Endothelial cell of umbilical vein (primary cell): ENCODE measurements at regions of chr14 and their contacts with region 1.

Region 1: GRCh38 chr14:59275653-59276052 is 87.2 kb downstream of the DAAM1 start:
- DNase-seq: peak; percentile 89
- H3K4me3 ChIP-seq: no peak overlapping the region
- H3K27ac ChIP-seq: peak overlapping the region; percentile 60
- H3K4me1 ChIP-seq: peaks cover 43% of the 10 kb centered on the region
- H3K27me3 ChIP-seq: no peaks in the 10 kb centered on the region
- CTCF ChIP-seq: no peak
- POLR2A ChIP-seq: no peak

Region 2: DNA sequence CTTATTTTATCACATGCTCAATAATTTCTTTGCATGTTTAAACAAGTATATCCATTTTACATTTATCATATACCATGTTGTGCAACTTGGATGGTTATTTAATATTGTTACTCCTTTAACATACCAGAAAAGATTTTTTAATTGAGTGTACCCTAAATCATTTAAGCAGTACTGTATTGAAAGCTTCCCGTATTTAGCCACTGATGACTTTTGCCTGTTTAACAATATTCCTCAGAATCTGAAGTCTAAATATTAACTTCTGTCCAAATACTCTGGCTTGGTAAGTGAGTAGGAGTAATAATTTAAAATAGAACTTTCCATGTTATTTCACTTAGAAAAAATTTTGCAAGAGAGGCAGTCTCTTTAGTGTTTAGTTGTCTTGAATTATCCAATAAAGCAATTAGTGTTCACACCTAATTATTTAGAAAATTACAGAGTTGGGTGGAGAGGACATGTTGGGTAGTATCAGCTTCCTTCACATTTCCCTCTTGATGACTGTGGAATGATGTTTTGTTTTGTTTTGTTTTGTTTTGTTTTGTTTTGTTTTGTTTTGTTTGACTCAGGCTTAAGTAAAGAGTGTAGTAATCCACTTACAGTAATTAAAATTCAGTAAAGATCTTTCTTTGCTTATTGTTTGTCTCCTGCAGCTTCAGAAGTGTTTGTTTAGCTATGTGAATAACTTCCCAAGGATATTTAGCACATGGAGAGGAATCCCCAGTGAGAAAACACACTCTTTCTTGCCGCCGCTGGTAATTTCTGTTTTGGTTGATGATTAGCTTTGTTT is 27.7 kb before region 1 on chr14:
- CTCF ChIA-PET with region 1: interaction called, 4 read pairs
- POLR2A ChIA-PET with region 1: no interaction called
- dilution Hi-C with region 1: no loop called
- intact Hi-C with region 1: loop called (anchors 1 kb)
- DNase-seq: peak; percentile 29
- H3K4me3 ChIP-seq: no peak overlapping the region
- H3K27ac ChIP-seq: no peak overlapping the region
- H3K4me1 ChIP-seq: peaks cover 21% of the 10 kb centered on the region
- H3K27me3 ChIP-seq: no peaks in the 10 kb centered on the region
- CTCF ChIP-seq: no peak
- POLR2A ChIP-seq: no peak

Region 3: GRCh38 chr14:59320763-59321640 is 45.3 kb after region 1 on chr14:
- CTCF ChIA-PET with region 1: no interaction called
- POLR2A ChIA-PET with region 1: no interaction called
- dilution Hi-C with region 1: no loop called
- intact Hi-C with region 1: loop called (anchors 1 kb)
- DNase-seq: peak; percentile 90
- H3K4me3 ChIP-seq: peak overlapping the region in 1 of 3 experiments; percentile 23
- H3K27ac ChIP-seq: peak overlapping the region; percentile 84
- H3K4me1 ChIP-seq: peaks cover 21% of the 10 kb centered on the region
- H3K27me3 ChIP-seq: no peaks in the 10 kb centered on the region
- CTCF ChIP-seq: no peak
- POLR2A ChIP-seq: peak; percentile 29

Region 4: DNA sequence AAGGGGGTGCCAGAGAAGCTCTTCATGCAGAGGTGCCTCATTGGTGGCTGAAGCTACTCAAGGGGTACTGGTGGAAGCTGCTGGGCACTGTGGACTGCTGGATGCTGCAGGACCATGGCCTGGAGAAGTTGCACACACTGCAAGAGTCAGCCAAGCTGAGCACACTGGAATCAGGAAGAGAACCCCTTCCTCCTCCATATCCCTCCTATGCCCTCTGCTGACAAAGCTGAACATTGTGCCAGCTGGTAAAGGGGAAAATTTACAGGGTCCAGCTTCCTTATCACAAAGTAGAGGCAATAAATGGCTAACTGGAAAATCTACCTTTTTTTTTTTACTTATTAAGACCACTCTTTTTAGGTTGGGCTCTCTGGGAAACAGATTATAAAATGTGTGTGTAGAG is 294.5 kb after region 1 on chr14:
- CTCF ChIA-PET with region 1: no interaction called
- POLR2A ChIA-PET with region 1: no interaction called
- dilution Hi-C with region 1: no loop called
- intact Hi-C with region 1: no loop called
- DNase-seq: no peak
- H3K4me3 ChIP-seq: no peak overlapping the region
- H3K27ac ChIP-seq: no peak overlapping the region
- H3K4me1 ChIP-seq: no peaks in the 10 kb centered on the region
- H3K27me3 ChIP-seq: peaks cover 4 to 25% of the 10 kb centered on the region in 2 experiments
- CTCF ChIP-seq: no peak
- POLR2A ChIP-seq: no peak

Region 5: DNA sequence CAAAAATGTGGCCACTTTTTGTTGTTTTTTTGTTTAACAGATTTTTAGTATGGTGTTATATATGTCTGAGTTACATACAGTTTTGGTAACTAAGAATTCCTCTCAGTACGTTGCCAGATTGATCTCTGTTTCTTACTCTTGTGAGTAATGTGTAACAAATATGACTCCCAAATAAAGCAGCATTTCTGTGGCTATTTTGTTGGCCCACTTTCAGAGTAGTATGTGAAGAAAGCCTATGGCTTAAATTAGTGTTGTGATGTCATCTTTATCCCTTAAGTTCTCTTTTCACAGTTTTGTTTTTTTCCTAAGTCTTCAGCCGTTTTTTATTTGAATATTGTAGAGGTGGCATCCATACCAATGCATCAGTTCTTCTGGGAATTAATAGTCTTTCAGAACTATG is 826.7 kb after region 1 on chr14:
- CTCF ChIA-PET with region 1: no interaction called
- POLR2A ChIA-PET with region 1: no interaction called
- dilution Hi-C with region 1: no loop called
- intact Hi-C with region 1: no loop called
- DNase-seq: no peak
- H3K4me3 ChIP-seq: no peak overlapping the region
- H3K27ac ChIP-seq: no peak overlapping the region
- H3K4me1 ChIP-seq: no peaks in the 10 kb centered on the region
- H3K27me3 ChIP-seq: no peaks in the 10 kb centered on the region
- CTCF ChIP-seq: no peak
- POLR2A ChIP-seq: no peak